Prostate gland (tissue), 2 donors: ENCODE measurements at regions of chr1 and their contacts with region 1.

Region 1: DNA sequence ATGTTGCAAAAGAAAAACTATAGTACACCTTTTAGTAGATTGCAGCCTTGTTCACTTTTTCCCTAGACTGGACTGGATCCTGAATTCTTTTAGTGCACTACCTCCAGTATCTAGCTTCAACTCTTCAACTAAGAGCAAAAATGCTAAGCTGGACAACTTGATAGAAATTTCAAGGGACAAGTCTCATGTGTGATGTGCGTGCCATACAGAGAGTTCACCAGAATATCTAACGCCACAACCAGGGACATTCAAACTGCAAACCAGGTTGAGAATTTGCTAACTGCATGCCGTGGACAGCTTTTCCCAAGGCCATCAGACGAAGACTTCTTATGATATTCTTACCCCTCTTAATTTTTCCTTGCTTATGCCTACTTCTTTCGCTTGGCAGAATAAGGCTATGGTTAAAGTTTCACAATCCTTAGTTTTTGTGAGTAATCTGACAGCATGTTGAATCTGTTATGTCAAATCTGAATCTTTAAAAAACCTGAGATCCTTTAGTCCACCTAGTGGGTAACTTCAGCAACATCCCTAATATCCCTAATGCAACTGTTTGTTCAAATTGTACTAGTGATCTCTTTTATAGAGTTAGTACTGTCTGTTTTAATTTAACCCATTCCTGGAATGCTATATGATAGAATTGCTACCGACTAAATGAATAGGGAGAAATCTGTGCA is 66.4 kb downstream of the DDAH1 start:
- DNase-seq: no peak
- H3K4me3 ChIP-seq: no peak overlapping the region
- H3K27ac ChIP-seq: no peak overlapping the region
- H3K4me1 ChIP-seq: no peaks in the 10 kb centered on the region
- H3K27me3 ChIP-seq: no peaks in the 10 kb centered on the region
- CTCF ChIP-seq: peak in 2 of 4 experiments; percentile 15 to 35
- POLR2A ChIP-seq: no peak

Region 2: DNA sequence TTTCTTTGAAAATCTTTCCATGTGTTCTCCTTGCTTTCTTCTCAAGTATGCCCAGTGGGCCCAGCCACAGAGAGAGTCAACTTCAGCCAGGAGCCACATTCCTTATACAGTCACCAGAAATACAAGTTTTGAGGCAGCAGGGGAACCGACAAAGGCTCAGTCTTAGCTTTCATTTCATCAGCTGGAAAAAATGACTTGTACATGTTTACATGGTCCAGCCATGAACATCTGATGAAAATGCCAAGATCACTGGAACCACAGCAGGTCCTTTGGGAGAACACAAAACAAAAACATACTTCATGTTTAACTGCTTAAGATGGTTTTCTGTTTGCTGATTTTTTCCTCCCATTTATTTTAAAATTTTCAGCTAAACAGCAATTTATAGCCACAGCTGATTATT is 270.2 kb before region 1 on chr1:
- intact Hi-C with region 1: no loop called
- DNase-seq: no peak
- H3K4me3 ChIP-seq: no peak overlapping the region
- H3K27ac ChIP-seq: no peak overlapping the region
- H3K4me1 ChIP-seq: no peaks in the 10 kb centered on the region
- H3K27me3 ChIP-seq: no peaks in the 10 kb centered on the region
- CTCF ChIP-seq: no peak
- POLR2A ChIP-seq: no peak

Region 3: GRCh38 chr1:85313888-85314696 is 84.4 kb before region 1 on chr1:
- intact Hi-C with region 1: loop called (anchors 5 kb)
- DNase-seq: peak; percentile 28
- H3K4me3 ChIP-seq: no peak overlapping the region
- H3K27ac ChIP-seq: peak overlapping the region; percentile 6 to 60
- H3K4me1 ChIP-seq: peaks cover 6% of the 10 kb centered on the region
- H3K27me3 ChIP-seq: no peaks in the 10 kb centered on the region
- CTCF ChIP-seq: no peak
- POLR2A ChIP-seq: no peak

Region 4: DNA sequence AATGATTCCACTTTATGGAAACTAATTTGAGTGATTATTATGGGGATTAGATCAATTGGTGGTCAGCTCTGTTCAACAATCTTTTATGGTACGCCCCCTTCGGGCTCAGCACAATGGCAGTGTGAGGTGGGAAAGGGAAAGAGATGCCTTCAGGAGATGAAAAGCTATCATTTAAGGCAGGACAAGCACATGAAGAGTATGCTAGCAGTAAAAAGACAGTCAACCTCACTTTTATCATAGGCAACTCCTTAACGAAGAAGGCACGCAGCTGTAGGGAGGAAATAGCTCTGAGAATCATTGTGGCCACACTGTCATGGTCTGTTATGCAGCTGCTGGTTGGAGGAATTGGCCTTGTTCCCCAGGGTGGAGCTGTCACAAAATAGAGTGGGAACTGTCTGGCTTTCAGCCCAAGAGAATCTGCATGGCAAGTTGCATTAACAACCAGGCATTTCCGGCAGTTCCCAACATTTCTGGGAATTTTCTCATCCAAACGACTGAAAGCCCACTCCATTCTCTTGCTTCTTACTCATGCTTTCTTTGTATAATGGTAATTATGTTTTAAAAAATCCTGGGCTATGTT is 67.7 kb before region 1 on chr1:
- intact Hi-C with region 1: no loop called
- DNase-seq: no peak
- H3K4me3 ChIP-seq: no peak overlapping the region
- H3K27ac ChIP-seq: no peak overlapping the region
- H3K4me1 ChIP-seq: no peaks in the 10 kb centered on the region
- H3K27me3 ChIP-seq: no peaks in the 10 kb centered on the region
- CTCF ChIP-seq: no peak
- POLR2A ChIP-seq: no peak